ENCODE measurements at regions of chr4 and their contacts with region 1.

Region 1: DNA sequence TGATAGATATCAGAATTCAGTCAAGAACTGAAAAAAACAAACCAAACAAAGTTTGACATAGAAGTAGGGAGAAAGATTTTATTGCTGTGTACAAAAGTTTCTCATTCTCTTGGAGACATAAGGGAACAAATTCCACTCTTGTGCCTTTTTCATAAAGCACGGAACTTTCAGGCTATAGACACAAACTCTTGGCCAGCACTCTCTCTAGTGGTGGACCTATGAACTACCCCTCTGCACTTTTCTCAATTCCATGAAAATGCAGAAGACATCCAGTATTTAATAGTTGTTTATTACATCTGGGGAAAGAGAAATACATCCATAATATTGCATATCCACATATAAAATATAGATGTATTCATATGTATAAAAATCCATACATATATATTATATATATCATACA is 291.6 kb upstream of the HS3ST1 start:
- DNase-seq: peak; percentile 14
- H3K4me3 Mint-ChIP-seq: no peak overlapping the region
- H3K27ac Mint-ChIP-seq: no peak overlapping the region
- H3K4me1 Mint-ChIP-seq: no peaks in the 10 kb centered on the region
- H3K27me3 Mint-ChIP-seq: peaks cover 16% of the 10 kb centered on the region

Region 2: GRCh38 chr4:10554694-10555093 is 1165.6 kb before region 1 on chr4:
- CTCF ChIA-PET with region 1: interaction called, 3 read pairs
- intact Hi-C with region 1: loop called (anchors 1 kb)
- DNase-seq: peak; percentile 71
- H3K4me3 Mint-ChIP-seq: no peak overlapping the region
- H3K27ac Mint-ChIP-seq: no peak overlapping the region
- H3K4me1 Mint-ChIP-seq: peaks cover 3% of the 10 kb centered on the region
- H3K27me3 Mint-ChIP-seq: peaks cover 11% of the 10 kb centered on the region

Region 3: DNA sequence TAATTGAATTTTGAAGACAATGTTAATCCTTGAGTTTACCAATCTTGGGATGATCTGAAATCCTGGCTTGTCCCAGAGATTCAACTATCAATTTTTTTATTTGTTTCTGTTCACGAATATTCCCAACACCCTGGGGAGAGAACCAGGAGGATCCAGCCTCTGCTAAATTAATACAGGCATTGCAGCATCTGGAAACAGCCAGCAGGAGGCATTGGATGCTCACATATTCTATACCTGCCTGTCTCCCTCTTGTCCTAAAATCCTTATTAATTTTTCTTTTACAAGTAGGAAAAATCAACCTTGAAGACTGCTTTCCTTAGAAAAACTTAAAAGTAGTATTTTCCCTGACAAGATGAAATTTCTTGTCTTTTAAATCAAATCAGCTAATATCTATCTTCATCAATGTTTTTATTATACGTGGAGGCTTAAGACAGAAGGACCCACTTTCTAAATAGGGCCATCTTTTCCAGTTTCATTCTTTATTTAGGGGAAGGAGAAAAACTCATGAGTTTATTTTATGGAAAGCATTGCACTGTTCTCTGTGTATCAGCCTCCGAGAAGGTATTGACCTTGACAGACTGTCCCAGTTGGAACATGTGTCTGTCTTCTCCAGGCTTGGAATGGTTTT is 1138.1 kb before region 1 on chr4:
- CTCF ChIA-PET with region 1: no interaction called
- intact Hi-C with region 1: loop called (anchors 1 kb)
- DNase-seq: peak; percentile 37
- H3K4me3 Mint-ChIP-seq: no peak overlapping the region
- H3K27ac Mint-ChIP-seq: no peak overlapping the region
- H3K4me1 Mint-ChIP-seq: peaks cover 15% of the 10 kb centered on the region
- H3K27me3 Mint-ChIP-seq: no peaks in the 10 kb centered on the region

Region 4: DNA sequence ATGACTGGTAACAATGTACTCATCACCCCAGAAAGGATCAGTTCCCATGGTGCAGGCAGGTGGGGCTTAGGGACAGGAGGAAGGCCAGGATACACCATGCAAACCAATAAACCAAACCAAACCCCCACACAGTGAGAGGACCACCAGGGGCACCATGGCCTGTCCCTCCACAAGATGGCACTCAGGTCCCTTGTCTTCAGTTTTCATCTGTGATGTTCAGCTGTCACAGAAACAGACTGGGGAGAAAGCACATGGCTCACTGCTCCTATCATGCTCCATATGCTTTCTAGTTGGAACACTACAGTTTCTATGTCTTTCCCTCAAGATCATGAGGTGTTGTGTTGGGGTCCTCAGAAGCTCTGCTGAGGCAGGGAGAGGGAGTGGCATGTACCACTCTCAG is 301.7 kb before region 1 on chr4:
- CTCF ChIA-PET with region 1: interaction called, 3 read pairs
- intact Hi-C with region 1: loop called (anchors 1 kb)
- DNase-seq: peak; percentile 22
- H3K4me3 Mint-ChIP-seq: no peak overlapping the region
- H3K27ac Mint-ChIP-seq: no peak overlapping the region
- H3K4me1 Mint-ChIP-seq: no peaks in the 10 kb centered on the region
- H3K27me3 Mint-ChIP-seq: no peaks in the 10 kb centered on the region

Region 5: GRCh38 chr4:12692815-12693214 is 972.5 kb after region 1 on chr4:
- CTCF ChIA-PET with region 1: no interaction called
- intact Hi-C with region 1: no loop called
- DNase-seq: no peak
- H3K4me3 Mint-ChIP-seq: no peak overlapping the region
- H3K27ac Mint-ChIP-seq: no peak overlapping the region
- H3K4me1 Mint-ChIP-seq: no peaks in the 10 kb centered on the region
- H3K27me3 Mint-ChIP-seq: peaks cover 2% of the 10 kb centered on the region

Region 6: DNA sequence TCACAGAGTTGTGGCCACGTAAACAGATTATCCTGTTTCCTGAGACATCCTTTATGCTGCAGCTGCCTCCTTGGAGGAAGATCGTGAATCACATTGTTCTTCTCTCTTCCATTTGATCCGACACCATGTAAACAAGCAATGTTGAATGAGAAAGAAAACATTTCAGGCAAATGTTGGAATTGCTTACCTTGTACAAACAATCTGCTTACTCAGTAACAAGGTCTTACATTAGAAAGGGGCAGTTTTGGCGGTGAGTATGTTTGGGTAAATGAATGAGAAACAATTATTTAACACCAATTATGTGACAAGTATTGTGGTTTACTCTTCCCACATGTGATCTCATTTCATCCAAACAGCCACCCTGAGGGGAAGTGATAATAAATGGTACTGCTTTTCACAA is 1126.1 kb after region 1 on chr4:
- CTCF ChIA-PET with region 1: no interaction called
- intact Hi-C with region 1: no loop called
- DNase-seq: no peak
- H3K4me3 Mint-ChIP-seq: no peak overlapping the region
- H3K27ac Mint-ChIP-seq: no peak overlapping the region
- H3K4me1 Mint-ChIP-seq: no peaks in the 10 kb centered on the region
- H3K27me3 Mint-ChIP-seq: peaks cover 7% of the 10 kb centered on the region